Naive thymus-derived CD4-positive, alpha-beta T cell (primary cell): ENCODE measurements at regions of chr18 and their contacts with region 1.

Region 1: GRCh38 chr18:3498698-3499471 is 48.9 kb downstream of the TGIF1 start:
- DNase-seq: peak in 4 of 9 donors; percentile 5 to 23 (median 8)
- ATAC-seq: peak; percentile 40
- H3K4me3 ChIP-seq: no peak overlapping the region
- H3K4me3 Mint-ChIP-seq: peak overlapping the region; percentile 27 to 82 (median 74)
- H3K27ac ChIP-seq: no peak overlapping the region
- H3K27ac Mint-ChIP-seq: peak overlapping the region in 1 of 9 donors; percentile 70
- H3K4me1 ChIP-seq: peaks cover 0 to 10% of the 10 kb centered on the region in 2 donors
- H3K4me1 Mint-ChIP-seq: peaks cover 6 to 32% (median 16%) of the 10 kb centered on the region in 7 donors
- H3K27me3 ChIP-seq: peaks cover 0 to 10% of the 10 kb centered on the region in 2 donors
- H3K27me3 Mint-ChIP-seq: peaks cover 31 to 66% (median 34%) of the 10 kb centered on the region in 5 donors

Region 2: DNA sequence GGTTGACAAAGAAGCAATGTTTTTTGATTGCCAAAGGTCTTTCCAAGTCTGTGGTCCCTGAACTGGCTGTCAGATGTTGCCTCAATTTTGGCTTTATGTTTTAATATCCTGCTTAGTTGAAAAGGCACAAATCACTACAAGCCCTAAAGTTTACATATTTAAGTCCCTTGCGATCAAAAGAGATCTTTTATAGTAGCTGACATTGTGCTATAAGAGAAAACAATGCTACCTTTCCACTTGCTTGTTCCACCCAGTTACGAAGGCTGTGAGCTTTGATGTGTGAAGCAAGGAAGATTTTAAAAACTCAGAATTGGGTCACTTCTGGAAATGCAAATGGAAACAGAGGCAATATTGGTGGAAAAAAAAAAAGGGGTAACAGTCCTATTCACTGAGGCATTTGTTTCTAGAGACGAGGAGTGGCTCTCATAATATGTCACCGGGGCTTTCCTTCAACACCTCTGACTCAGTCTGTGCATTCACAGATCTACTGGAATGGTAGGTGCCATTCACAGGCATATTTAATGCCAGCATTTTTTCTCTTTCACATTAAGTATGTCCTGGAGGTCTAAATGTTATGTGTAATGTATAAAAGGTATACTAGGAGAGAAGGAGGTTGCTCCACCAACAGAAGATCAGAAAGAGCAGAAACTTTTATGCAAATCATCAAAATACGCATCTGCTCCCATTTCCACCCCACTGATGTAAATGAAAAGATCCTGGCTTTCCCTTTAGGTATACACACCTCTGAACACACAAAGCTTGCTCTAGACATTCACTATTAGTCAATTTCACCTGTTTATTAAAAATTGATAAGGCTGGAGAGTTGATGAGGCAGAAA is 42.9 kb after region 1 on chr18:
- CTCF ChIA-PET with region 1: no interaction called
- POLR2A ChIA-PET with region 1: no interaction called
- intact Hi-C with region 1: loop called in 1 of 2 experiments (anchors 5 kb)
- DNase-seq: no peak
- ATAC-seq: no peak
- H3K4me3 ChIP-seq: no peak overlapping the region
- H3K4me3 Mint-ChIP-seq: no peak overlapping the region
- H3K27ac ChIP-seq: no peak overlapping the region
- H3K27ac Mint-ChIP-seq: no peak overlapping the region
- H3K4me1 ChIP-seq: no peaks in the 10 kb centered on the region
- H3K4me1 Mint-ChIP-seq: peaks cover 0 to 5% (median 0%) of the 10 kb centered on the region in 7 donors
- H3K27me3 ChIP-seq: no peaks in the 10 kb centered on the region
- H3K27me3 Mint-ChIP-seq: peaks cover 0 to 11% (median 0%) of the 10 kb centered on the region in 5 donors